Activated T-helper 1 cell treated with anti-CD3 and anti-CD28 coated beads, Interleukin-12 subunit alpha, Interleukin-12 subunit beta, Interleukin-2, Interleukin-4 antibody, amounts not matched to agents 30 ng/mL and 10 ng/mL and 1 ng/mL, durations not matched to agents 14 hours and 24 hours and 36 hours (primary cell): ENCODE measurements at regions of chr20 and their contacts with region 1.

Region 1: DNA sequence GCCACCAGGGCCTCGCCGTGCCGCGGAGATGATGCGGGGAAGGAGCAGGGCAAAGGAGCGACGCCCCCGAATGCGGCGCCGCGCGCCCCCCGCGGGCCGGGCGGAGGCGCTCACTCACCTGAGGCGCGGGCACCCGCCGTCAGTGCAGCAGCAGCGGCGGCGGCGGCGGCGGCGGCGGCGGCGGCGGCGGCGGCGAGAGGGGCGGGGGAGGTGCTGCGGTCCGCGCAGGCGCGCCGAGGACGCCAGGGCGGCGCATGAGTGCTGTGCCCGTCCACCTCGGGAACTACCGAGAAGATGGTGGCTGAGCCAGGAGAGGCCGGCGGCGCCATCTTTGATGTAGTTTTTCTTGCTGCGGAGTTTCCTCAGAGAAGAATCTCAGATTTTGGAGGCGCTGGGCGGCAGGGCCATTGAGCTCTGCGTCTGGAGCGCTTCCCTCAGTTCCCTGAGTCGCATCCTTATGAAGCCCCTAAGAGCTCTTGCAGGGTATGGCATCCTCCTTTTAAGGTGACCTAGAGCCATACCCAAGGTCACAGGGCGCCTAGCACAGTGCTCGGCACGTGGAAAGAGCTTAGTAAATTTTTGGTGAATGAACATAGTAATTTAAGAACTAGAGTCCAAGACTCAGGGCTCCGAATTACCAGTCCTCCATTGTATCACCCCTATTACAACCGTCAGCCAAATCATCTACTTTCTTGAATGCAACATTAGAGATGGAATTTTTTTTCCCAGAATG is at the start of gene NDRG3:
- DNase-seq: peak; percentile 90
- H3K4me3 Mint-ChIP-seq: peak within 1 kb of the TSS; percentile 91
- H3K27ac Mint-ChIP-seq: peak within 1 kb of the TSS; percentile 83
- H3K4me1 Mint-ChIP-seq: peaks cover 27% of the 10 kb centered on the region
- H3K27me3 Mint-ChIP-seq: peaks cover 6% of the 10 kb centered on the region
- total RNA-seq, gene NDRG3: 21.3 and 21.9 TPM in 2 replicates

Region 2: GRCh38 chr20:36235892-36236785 is 510.0 kb before region 1 on chr20 and contains the start of gene AAR2:
- intact Hi-C with region 1: loop called (anchors 5 kb)
- DNase-seq: peak; percentile 76
- H3K4me3 Mint-ChIP-seq: peak within 1 kb of the TSS; percentile 88
- H3K27ac Mint-ChIP-seq: peak within 1 kb of the TSS; percentile 91
- H3K4me1 Mint-ChIP-seq: peaks cover 30% of the 10 kb centered on the region
- H3K27me3 Mint-ChIP-seq: no peaks in the 10 kb centered on the region
- total RNA-seq, gene AAR2: 33.3 and 36.7 TPM in 2 replicates

Region 3: DNA sequence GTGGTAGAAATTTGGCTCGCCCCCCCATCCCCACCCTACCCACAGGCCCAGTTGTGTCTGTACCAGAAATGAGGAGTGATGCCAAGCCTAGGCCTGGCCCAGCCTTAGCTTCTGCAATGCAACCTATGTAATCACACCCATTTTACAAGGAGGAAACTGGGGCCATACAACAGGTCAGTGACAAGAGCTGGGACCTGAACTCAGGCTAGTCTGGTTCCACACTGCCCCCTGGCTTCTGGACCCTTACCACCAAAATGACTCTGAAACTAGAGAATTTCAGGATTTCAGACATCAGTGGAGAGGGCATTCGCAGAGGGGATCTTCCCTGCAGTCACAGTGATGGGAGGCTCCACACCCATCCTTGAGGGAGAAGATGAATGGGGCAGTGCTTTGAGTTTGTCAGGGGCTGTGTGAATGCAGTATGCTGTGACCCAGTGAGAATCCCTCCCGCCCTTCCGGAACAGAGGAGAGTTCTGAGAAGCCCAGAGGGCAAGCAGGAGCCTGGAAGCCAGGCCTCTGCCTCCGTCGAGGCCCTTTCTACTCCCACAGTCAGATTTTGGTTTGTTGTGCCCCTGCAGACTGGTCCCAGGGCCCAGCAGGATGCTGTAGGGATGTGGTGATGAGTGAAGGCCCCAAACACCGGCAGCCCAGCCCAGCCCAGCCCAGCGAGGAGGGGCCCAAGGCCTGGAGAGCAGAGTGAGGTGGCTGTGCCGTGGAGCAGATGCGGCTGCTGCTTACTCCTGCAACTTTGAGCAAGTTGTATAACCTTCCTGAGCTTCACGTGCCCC is 252.9 kb before region 1 on chr20:
- intact Hi-C with region 1: no loop called
- DNase-seq: no peak
- H3K4me3 Mint-ChIP-seq: no peak overlapping the region
- H3K27ac Mint-ChIP-seq: no peak overlapping the region
- H3K4me1 Mint-ChIP-seq: peaks cover 30% of the 10 kb centered on the region
- H3K27me3 Mint-ChIP-seq: no peaks in the 10 kb centered on the region

Region 4: DNA sequence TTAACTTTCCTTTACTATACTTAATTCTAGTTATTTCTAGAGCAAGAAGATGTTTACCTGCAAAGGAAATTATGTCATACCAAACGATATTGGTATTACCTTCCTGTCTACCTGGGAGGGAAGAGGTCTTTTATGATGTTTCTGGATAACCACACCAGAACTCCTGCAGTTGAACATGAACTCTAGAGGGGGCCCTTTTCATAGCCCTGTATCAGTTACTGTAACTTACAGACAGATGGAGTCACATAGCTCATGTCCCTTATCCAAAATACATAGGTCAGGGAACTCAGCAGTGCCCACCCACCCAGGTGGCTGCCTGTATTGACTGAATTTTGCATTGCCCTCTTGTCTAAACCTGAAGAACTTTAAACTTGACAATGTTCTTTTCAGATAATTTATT is 239.8 kb before region 1 on chr20:
- intact Hi-C with region 1: no loop called
- DNase-seq: no peak
- H3K4me3 Mint-ChIP-seq: no peak overlapping the region
- H3K27ac Mint-ChIP-seq: no peak overlapping the region
- H3K4me1 Mint-ChIP-seq: peaks cover 11% of the 10 kb centered on the region
- H3K27me3 Mint-ChIP-seq: no peaks in the 10 kb centered on the region

Region 5: DNA sequence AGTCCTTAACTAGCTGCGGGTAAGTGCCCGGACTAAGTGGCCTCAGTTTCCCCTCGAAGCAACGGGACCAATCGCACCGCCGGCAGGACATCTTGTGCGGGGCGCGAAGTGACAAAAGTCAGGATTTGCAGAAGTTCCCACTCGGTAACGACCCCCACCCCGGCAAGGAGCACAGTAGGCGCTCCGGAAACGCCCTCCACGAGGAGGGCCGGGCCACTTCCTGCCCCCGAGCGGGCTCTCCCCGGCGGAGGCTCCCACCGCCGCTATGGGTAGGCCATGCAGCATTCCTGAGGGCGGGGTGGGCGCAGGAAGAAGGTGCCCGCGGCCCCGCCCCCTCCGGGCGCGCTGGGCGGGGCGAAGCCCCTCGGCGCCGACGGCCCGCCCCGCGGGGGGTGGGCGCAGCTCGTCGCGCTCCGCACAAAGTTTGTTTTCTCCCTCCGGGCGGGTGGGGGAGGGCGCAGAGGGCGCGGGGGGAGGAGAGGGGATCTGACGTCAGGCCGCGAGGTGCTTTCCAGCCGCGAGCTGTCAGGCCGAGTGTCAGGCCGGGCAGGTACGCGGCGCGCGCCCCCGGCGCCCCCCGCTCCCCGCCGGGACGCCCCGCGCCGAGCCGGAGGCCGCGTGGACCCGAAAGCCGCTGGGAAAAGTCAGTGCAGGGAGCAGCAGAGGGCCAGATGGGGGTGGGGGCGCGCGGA is 172.8 kb before region 1 on chr20 and contains the start of gene TGIF2:
- intact Hi-C with region 1: loop called (anchors 2 kb)
- DNase-seq: peak; percentile 79
- H3K4me3 Mint-ChIP-seq: peak within 1 kb of the TSS; percentile 96
- H3K27ac Mint-ChIP-seq: peak within 1 kb of the TSS; percentile 97
- H3K4me1 Mint-ChIP-seq: peaks cover 37% of the 10 kb centered on the region
- H3K27me3 Mint-ChIP-seq: peaks cover 3% of the 10 kb centered on the region
- total RNA-seq, gene TGIF2: 50.9 and 55.4 TPM in 2 replicates

Region 6: DNA sequence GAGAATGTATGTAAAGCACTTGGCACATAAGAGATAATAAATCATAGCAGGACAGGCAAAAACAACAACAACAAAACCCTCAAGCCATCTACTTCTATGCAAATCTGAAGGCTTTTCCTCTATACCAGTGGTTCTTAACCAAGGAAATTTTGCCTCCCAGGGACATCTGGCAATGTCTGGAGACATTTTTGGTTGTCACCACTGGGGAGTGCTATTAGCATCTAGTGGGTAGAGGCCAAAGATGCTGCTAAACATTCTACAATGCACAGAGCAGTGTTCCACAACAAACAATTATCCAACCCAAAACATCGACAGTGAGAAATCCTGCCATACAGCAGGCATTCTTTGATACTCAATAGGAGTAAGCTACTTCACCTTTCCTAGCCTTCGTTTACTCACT is 28.4 kb before region 1 on chr20:
- intact Hi-C with region 1: loop called (anchors 1 kb)
- DNase-seq: no peak
- H3K4me3 Mint-ChIP-seq: no peak overlapping the region
- H3K27ac Mint-ChIP-seq: no peak overlapping the region
- H3K4me1 Mint-ChIP-seq: peaks cover 14% of the 10 kb centered on the region
- H3K27me3 Mint-ChIP-seq: peaks cover 1% of the 10 kb centered on the region

Region 7: GRCh38 chr20:36728986-36729385 is 17.1 kb before region 1 on chr20:
- intact Hi-C with region 1: loop called (anchors 1 kb)
- DNase-seq: no peak
- H3K4me3 Mint-ChIP-seq: no peak overlapping the region
- H3K27ac Mint-ChIP-seq: no peak overlapping the region
- H3K4me1 Mint-ChIP-seq: peaks cover 12% of the 10 kb centered on the region
- H3K27me3 Mint-ChIP-seq: no peaks in the 10 kb centered on the region

Region 8: DNA sequence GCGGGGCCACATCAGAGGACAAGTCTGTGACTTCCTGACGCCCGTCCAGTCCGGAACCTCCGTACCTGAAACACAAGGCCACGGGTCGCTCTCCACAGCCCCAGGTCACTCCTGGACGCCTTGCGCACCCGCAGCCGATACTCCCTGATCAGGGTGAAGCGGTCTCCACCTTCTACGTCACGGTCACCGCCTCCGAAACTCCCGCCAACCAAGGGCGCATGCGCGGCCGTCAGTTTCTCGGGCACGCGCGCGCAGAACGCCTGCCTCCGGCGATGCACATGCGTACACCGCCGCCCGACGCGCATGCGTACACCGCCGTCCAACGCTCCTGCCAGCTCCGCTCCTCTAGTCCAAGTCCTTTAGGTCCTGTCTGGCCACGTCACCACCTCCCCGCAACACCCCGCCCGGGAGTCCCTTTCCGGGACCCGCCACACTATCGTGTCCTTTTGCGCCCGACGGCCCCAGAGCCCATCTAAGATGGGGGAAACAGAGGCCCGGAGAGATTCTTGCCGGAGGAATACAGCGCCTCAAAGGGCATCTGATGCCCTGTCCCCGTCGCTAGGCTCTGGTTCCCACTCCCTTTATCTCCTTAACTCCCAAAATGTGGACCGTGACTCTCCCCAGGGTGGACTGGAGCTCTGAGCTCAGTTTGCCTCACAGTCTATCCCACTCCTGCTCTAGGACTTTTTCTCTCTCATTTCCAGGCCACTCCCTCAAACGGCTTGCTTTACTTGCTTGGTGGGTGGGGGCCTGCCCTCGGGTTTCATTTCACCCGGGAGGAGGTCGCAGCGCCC is 27.7 kb after region 1 on chr20 and contains the start of gene DSN1:
- intact Hi-C with region 1: loop called (anchors 1 kb)
- DNase-seq: peak; percentile 98
- H3K4me3 Mint-ChIP-seq: peak within 1 kb of the TSS; percentile 86
- H3K27ac Mint-ChIP-seq: peak within 1 kb of the TSS; percentile 95
- H3K4me1 Mint-ChIP-seq: peaks cover 48% of the 10 kb centered on the region
- H3K27me3 Mint-ChIP-seq: peaks cover 6% of the 10 kb centered on the region
- total RNA-seq, gene DSN1: 23.2 and 29.0 TPM in 2 replicates

Region 9: GRCh38 chr20:37501940-37502339 is 755.8 kb after region 1 on chr20:
- intact Hi-C with region 1: no loop called
- DNase-seq: no peak
- H3K4me3 Mint-ChIP-seq: no peak overlapping the region
- H3K27ac Mint-ChIP-seq: no peak overlapping the region
- H3K4me1 Mint-ChIP-seq: no peaks in the 10 kb centered on the region
- H3K27me3 Mint-ChIP-seq: peaks cover 2% of the 10 kb centered on the region